A549 (cell line): ENCODE measurements at regions of chr1 and their contacts with region 1.

Region 1: DNA sequence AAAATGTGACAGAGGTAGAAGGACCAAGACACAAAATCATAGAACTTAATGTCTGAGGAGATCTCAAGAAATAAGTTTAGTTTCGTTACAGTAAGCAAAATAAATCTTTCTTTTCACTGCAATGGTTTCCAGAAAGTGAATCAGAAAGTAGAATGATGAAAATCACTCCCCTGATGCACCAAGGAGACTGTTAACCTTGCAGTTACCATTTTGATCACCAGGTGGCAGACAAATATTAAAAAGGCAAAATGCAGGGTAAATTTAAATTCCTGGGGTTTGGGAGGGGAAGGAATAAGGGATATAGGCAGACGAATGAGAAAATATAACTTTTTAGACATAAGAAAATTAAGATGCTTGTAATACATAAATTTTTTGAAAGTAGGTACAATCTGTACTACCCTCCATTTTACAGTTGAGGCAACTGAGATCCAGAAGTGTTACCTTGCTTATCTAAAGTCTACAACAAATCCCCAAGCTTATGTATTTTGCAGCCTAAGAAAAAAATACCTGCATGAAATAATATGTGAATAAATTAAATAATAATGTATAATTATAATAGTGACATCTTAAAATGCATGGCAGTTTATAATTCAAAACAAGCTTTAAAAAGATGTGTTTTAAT is 253.2 kb downstream of the CRB1 start:
- DNase-seq: peak; percentile 25 to 26
- ATAC-seq: peak; percentile 65 to 72; a peak in 4 of 6 replicates
- H3K4me3 ChIP-seq: no peak overlapping the region
- H3K27ac ChIP-seq: no peak overlapping the region
- H3K4me1 ChIP-seq: no peaks in the 10 kb centered on the region
- CTCF ChIP-seq: peak; percentile 75
- EP300 ChIP-seq: no peak
- POLR2A ChIP-seq: no peak
- RAD21 ChIP-seq: peak; percentile 54 to 61; a peak in 4 of 5 replicates

Region 2: GRCh38 chr1:197868751-197869489 is 347.7 kb after region 1 on chr1:
- CTCF ChIA-PET with region 1: interaction called, 11 read pairs
- POLR2A ChIA-PET with region 1: no interaction called
- DNase-seq: peak; percentile 40 to 68
- ATAC-seq: peak; percentile 98
- H3K4me3 ChIP-seq: no peak overlapping the region
- H3K27ac ChIP-seq: no peak overlapping the region
- H3K4me1 ChIP-seq: no peaks in the 10 kb centered on the region
- CTCF ChIP-seq: peak; percentile 64
- EP300 ChIP-seq: no peak
- POLR2A ChIP-seq: no peak
- RAD21 ChIP-seq: peak; percentile 83 to 86

Region 3: DNA sequence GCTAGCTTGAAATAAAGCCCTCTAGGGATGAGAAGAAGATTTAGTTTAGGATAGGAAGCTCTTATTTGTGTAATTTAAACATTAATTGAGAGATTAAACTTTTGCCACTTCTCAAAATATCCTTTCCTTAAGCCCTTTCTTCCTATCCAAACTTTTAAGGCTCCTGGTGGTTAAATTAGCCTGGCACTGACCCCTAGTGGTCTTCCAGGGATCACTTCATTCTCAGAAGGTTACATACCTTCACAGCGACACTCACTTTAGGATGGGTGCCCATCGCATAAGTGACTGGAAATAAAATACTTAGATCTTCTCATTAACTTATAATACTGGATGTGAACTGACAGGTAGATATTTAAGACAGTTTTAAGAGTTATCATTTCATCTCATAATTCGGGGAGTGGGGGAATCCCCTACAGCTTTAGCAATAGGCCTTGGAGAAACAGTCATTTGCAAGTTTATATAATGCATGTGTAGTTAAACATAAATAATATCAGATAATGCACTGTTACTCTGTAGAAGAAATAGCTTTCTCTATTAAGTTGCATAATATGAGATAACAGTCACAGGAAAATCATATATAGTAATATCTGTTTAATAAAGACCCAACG is 403.4 kb after region 1 on chr1:
- CTCF ChIA-PET with region 1: interaction called, 12 read pairs
- POLR2A ChIA-PET with region 1: no interaction called
- DNase-seq: peak; percentile 65 to 75
- ATAC-seq: peak; percentile 84 to 91; a peak in 5 of 6 replicates
- H3K4me3 ChIP-seq: no peak overlapping the region
- H3K27ac ChIP-seq: no peak overlapping the region
- H3K4me1 ChIP-seq: peaks cover 3% of the 10 kb centered on the region; the same call in 1 of the 3 replicates
- CTCF ChIP-seq: peak; percentile 89
- EP300 ChIP-seq: no peak
- POLR2A ChIP-seq: no peak
- RAD21 ChIP-seq: peak; percentile 81 to 89